CD8-positive, alpha-beta T cell (primary cell): ENCODE measurements at regions of chr10 and their contacts with region 1.

Region 1: DNA sequence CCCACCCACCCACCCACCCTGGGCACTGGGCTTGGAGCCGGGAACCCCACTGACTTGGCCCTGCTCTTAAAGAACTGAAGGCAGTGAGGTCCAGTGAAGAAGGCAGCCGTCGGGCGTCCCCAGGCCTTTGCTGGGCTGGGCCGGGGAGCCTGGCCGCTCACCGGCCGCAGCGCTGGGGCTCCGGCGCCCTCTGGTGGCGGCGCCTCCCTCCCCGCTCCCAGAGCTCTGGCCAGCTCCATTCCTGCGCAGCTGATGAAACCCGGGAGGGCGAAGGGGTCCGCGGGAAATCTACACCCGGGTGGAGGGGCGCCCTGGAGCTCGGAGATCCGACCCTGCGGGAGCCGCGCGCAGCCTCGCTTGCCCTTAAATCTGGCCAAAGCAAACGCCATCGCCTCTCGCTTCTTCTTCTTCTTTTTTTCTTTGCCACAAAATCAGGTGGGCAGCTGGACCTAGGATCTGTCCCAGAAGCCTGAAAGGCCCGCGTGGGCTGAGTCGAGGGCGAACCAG is 1.7 kb upstream of the CXCL12 start:
- DNase-seq: peak in 5 of 9 experiments; percentile 16 to 54 (median 44)
- ATAC-seq: no peak
- H3K4me3 ChIP-seq: no peak overlapping the region
- H3K4me3 Mint-ChIP-seq: no peak overlapping the region
- H3K27ac ChIP-seq: no peak overlapping the region
- H3K27ac Mint-ChIP-seq: no peak overlapping the region
- H3K4me1 ChIP-seq: no peaks in the 10 kb centered on the region
- H3K4me1 Mint-ChIP-seq: peaks cover 3% of the 10 kb centered on the region
- H3K27me3 ChIP-seq: peaks cover 3 to 5% of the 10 kb centered on the region in 2 experiments
- H3K27me3 Mint-ChIP-seq: peaks cover 30% of the 10 kb centered on the region
- CTCF ChIP-seq: peak; percentile 41

Region 2: GRCh38 chr10:44024356-44025116 is 362.1 kb before region 1 on chr10:
- CTCF ChIA-PET with region 1: no interaction called
- POLR2A ChIA-PET with region 1: no interaction called
- intact Hi-C with region 1: loop called in 1 of 2 experiments (anchors 5 kb)
- DNase-seq: no peak
- ATAC-seq: no peak
- H3K4me3 ChIP-seq: no peak overlapping the region
- H3K4me3 Mint-ChIP-seq: no peak overlapping the region
- H3K27ac ChIP-seq: no peak overlapping the region
- H3K27ac Mint-ChIP-seq: no peak overlapping the region
- H3K4me1 ChIP-seq: no peaks in the 10 kb centered on the region
- H3K4me1 Mint-ChIP-seq: no peaks in the 10 kb centered on the region
- H3K27me3 ChIP-seq: no peaks in the 10 kb centered on the region
- H3K27me3 Mint-ChIP-seq: peaks cover 3% of the 10 kb centered on the region
- CTCF ChIP-seq: no peak

Region 3: DNA sequence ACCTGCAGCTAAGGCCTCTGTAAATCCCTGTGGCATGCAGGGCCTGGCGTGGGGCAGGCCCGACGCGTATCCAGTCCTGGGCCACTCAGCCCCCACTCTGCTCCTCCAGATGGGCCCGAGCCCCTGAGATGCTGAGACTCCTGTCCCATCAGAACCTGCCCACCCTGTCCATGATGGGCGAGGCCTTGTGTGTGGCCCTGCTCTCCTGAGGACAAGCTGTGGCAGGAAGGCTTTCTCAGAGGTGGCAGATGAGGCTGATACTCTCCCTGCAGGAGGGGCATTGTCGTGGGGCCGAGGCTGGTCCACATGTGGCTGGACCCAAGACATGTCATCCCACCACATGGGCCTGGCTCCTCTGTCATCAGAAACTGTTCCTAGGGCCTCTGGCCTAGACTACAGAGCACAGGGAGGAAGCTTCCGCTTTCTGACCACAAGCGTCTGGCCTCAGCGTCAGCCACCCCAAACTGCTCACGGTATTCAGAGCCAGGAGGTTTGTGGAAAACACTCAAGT is 993.4 kb after region 1 on chr10:
- CTCF ChIA-PET with region 1: no interaction called
- POLR2A ChIA-PET with region 1: no interaction called
- intact Hi-C with region 1: no loop called
- DNase-seq: peak in 1 of 9 experiments; percentile 29
- ATAC-seq: no peak
- H3K4me3 ChIP-seq: no peak overlapping the region
- H3K4me3 Mint-ChIP-seq: no peak overlapping the region
- H3K27ac ChIP-seq: no peak overlapping the region
- H3K27ac Mint-ChIP-seq: no peak overlapping the region
- H3K4me1 ChIP-seq: peaks cover under 1% of the 10 kb centered on the region
- H3K4me1 Mint-ChIP-seq: peaks cover 3% of the 10 kb centered on the region
- H3K27me3 ChIP-seq: no peaks in the 10 kb centered on the region
- H3K27me3 Mint-ChIP-seq: peaks cover 6% of the 10 kb centered on the region
- CTCF ChIP-seq: no peak